CD4-positive, alpha-beta T cell (primary cell): ENCODE measurements at regions of chr1 and their contacts with region 1.

Region 1: DNA sequence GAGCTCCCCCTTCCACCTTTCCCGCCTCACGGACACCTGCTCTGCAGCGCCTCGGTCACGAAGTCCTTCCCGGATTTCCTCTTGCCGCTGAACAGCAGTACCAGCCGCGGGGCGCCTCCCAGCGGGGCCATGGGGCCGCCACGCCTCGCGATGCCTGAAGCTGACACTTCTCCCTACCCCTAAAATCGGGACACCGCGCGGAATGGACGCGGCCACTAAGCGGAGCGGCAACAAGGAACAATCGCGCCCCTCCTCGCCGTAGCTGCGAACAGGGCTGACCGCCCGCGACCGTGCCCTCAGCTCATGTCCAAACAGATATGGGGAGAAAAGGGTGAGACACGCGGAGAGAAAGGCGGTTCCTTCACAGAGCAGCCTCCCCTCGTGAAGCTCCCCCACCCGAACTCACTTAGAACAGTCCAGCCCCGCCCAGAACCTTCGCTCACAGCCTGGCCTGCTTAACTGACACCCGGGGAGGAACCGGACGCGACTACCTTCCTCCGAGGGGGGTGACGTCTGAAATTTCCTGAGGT is at the start of gene PMVK:
- DNase-seq: peak; percentile 90 to 98 (median 94)
- ATAC-seq: peak; percentile 79
- H3K4me3 ChIP-seq: peak within 1 kb of the TSS; percentile 86
- H3K4me3 Mint-ChIP-seq: peak within 1 kb of the TSS; percentile 90
- H3K27ac ChIP-seq: peak within 1 kb of the TSS; percentile 98 to 100
- H3K27ac Mint-ChIP-seq: peak within 1 kb of the TSS; percentile 98
- H3K4me1 ChIP-seq: peaks cover 58% of the 10 kb centered on the region
- H3K4me1 Mint-ChIP-seq: peaks cover 59% of the 10 kb centered on the region
- H3K27me3 ChIP-seq: no peaks in the 10 kb centered on the region
- H3K27me3 Mint-ChIP-seq: no peaks in the 10 kb centered on the region
- CTCF ChIP-seq: peak; percentile 51
- total RNA-seq, gene PMVK: 6.6 to 7.4 TPM

Region 2: DNA sequence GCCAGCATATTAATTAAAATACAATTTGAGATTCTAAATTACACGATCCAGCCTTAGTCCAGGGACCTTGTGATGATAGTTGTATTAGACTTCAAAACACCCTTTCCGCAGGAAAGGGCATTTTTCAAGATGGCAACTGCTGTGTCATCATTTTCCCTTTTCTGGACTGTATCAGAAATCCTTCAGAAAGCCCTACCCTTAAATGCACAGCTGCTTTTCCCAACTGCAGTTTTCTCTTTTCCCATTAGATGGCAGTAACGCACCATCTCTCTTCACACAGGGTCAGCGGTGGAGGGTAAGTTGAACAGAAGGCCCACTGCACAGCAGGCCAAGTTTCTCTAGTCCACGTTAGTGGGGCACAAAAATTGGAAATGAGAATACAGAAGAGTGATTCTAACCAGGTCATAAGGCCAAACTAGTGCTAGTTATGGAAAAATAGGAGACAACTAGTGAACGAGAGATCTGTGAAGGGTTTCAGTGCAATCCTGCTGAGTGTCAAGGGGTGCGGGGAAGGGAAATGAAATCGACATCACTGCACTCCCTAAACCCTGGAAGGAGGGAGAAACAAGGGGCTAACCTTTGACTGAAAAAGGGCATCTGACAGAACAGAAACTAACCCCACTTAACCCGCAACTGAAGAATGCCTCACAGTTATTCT is 456.7 kb before region 1 on chr1:
- CTCF ChIA-PET with region 1: no interaction called
- POLR2A ChIA-PET with region 1: no interaction called
- intact Hi-C with region 1: no loop called
- DNase-seq: peak in 13 of 14 experiments; percentile 23 to 84 (median 43)
- ATAC-seq: peak; percentile 91
- H3K4me3 ChIP-seq: no peak overlapping the region
- H3K4me3 Mint-ChIP-seq: no peak overlapping the region
- H3K27ac ChIP-seq: no peak overlapping the region
- H3K27ac Mint-ChIP-seq: no peak overlapping the region
- H3K4me1 ChIP-seq: peaks cover 7% of the 10 kb centered on the region
- H3K4me1 Mint-ChIP-seq: peaks cover 20% of the 10 kb centered on the region
- H3K27me3 ChIP-seq: no peaks in the 10 kb centered on the region
- H3K27me3 Mint-ChIP-seq: no peaks in the 10 kb centered on the region
- CTCF ChIP-seq: peak; percentile 90

Region 3: GRCh38 chr1:154791292-154792166 is 145.1 kb before region 1 on chr1:
- CTCF ChIA-PET with region 1: interaction called, 3 read pairs
- POLR2A ChIA-PET with region 1: interaction called, 6 read pairs
- intact Hi-C with region 1: loop called in 1 of 2 experiments (anchors 2 kb)
- DNase-seq: peak; percentile 71 to 95 (median 82)
- ATAC-seq: peak; percentile 98
- H3K4me3 ChIP-seq: no peak overlapping the region
- H3K4me3 Mint-ChIP-seq: peak overlapping the region; percentile 70
- H3K27ac ChIP-seq: peak overlapping the region in 1 of 2 donors; percentile 51
- H3K27ac Mint-ChIP-seq: peak overlapping the region; percentile 71
- H3K4me1 ChIP-seq: peaks cover 26% of the 10 kb centered on the region
- H3K4me1 Mint-ChIP-seq: peaks cover 33% of the 10 kb centered on the region
- H3K27me3 ChIP-seq: no peaks in the 10 kb centered on the region
- H3K27me3 Mint-ChIP-seq: no peaks in the 10 kb centered on the region
- CTCF ChIP-seq: peak; percentile 38

Region 4: DNA sequence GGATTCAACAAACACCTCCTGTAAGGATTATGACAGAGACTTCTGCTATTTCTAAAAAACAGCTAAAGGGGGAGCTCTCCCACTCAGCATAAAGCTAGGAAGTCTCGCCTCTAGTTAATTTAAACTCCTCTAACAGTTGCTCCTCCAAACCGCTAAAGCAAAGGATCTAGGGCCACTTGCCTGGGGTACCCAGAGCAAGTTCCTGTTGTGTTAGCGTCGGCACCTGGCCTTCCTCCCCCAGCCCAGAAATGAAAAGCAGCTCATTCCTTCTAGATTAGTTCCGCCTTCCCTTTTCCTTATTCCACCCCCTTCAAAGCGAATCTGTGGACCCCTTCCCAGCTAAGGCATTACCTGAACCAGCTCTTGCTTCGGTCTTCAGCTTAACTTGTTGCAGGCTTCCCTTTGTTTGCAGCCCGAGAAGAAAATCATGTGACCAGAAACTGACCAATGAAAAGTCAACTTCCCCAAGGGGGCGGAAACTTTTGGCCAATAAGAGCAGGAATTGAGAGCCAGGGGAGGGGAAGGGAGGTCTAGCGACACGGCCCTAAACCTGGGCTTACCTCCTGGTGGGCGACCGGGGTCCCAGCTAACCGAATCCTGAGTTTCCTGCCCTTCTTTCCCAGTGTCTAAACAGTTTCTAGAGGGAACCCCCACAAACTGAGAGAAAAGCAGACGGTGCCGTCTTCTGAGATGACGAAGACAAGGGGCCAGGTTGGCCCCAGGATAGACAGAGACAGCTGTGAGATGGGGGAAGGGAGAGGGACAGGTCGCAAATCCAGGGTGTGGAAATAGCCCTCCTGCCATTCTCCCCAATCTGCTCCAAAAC is 19.3 kb after region 1 on chr1 and contains the start of gene PBXIP1:
- CTCF ChIA-PET with region 1: interaction called, 38 read pairs
- POLR2A ChIA-PET with region 1: interaction called, 23 read pairs
- intact Hi-C with region 1: loop called (anchors 1 kb)
- DNase-seq: peak; percentile 64 to 95 (median 78)
- ATAC-seq: peak; percentile 40
- H3K4me3 ChIP-seq: peak within 1 kb of the TSS; percentile 69
- H3K4me3 Mint-ChIP-seq: peak within 1 kb of the TSS; percentile 95
- H3K27ac ChIP-seq: peak within 1 kb of the TSS; percentile 100
- H3K27ac Mint-ChIP-seq: peak within 1 kb of the TSS; percentile 96
- H3K4me1 ChIP-seq: peaks cover 96% of the 10 kb centered on the region
- H3K4me1 Mint-ChIP-seq: peaks cover 57% of the 10 kb centered on the region
- H3K27me3 ChIP-seq: no peaks in the 10 kb centered on the region
- H3K27me3 Mint-ChIP-seq: no peaks in the 10 kb centered on the region
- CTCF ChIP-seq: peak; percentile 40
- total RNA-seq, gene PBXIP1: 434 to 440 TPM

Region 5: GRCh38 chr1:154961497-154962262 is 25.1 kb after region 1 on chr1 and contains the start of gene PYGO2:
- CTCF ChIA-PET with region 1: interaction called, 23 read pairs
- POLR2A ChIA-PET with region 1: interaction called, 23 read pairs
- intact Hi-C with region 1: loop called in 1 of 2 experiments (anchors 1 kb)
- DNase-seq: peak; percentile 65 to 91 (median 77)
- ATAC-seq: peak; percentile 72
- H3K4me3 ChIP-seq: peak within 1 kb of the TSS; percentile 68
- H3K4me3 Mint-ChIP-seq: peak within 1 kb of the TSS; percentile 99
- H3K27ac ChIP-seq: peak within 1 kb of the TSS; percentile 88 to 95
- H3K27ac Mint-ChIP-seq: peak within 1 kb of the TSS; percentile 98
- H3K4me1 ChIP-seq: peaks cover 58% of the 10 kb centered on the region
- H3K4me1 Mint-ChIP-seq: peaks cover 20% of the 10 kb centered on the region
- H3K27me3 ChIP-seq: no peaks in the 10 kb centered on the region
- H3K27me3 Mint-ChIP-seq: no peaks in the 10 kb centered on the region
- CTCF ChIP-seq: peak; percentile 60
- total RNA-seq, gene PYGO2: 30.3 to 32.8 TPM

Region 6: GRCh38 chr1:154974063-154974807 is 37.6 kb after region 1 on chr1 and contains the start of gene CKS1B:
- CTCF ChIA-PET with region 1: interaction called, 3 read pairs
- POLR2A ChIA-PET with region 1: interaction called, 20 read pairs
- intact Hi-C with region 1: loop called (anchors 1 to 2 kb)
- DNase-seq: peak; percentile 93 to 100 (median 96)
- ATAC-seq: peak; percentile 87
- H3K4me3 ChIP-seq: peak within 1 kb of the TSS; percentile 81
- H3K4me3 Mint-ChIP-seq: no peak within 1 kb of the TSS
- H3K27ac ChIP-seq: peak within 1 kb of the TSS; percentile 94 to 99
- H3K27ac Mint-ChIP-seq: no peak within 1 kb of the TSS
- H3K4me1 ChIP-seq: peaks cover 49% of the 10 kb centered on the region
- H3K4me1 Mint-ChIP-seq: peaks cover 26% of the 10 kb centered on the region
- H3K27me3 ChIP-seq: no peaks in the 10 kb centered on the region
- H3K27me3 Mint-ChIP-seq: no peaks in the 10 kb centered on the region
- CTCF ChIP-seq: no peak
- total RNA-seq, gene CKS1B: 1.4 to 3.9 TPM

Region 7: GRCh38 chr1:154982897-154983648 is 46.5 kb after region 1 on chr1 and contains the start of gene FLAD1:
- CTCF ChIA-PET with region 1: interaction called, 8 read pairs
- POLR2A ChIA-PET with region 1: interaction called, 22 read pairs
- intact Hi-C with region 1: no loop called
- DNase-seq: peak; percentile 85 to 99 (median 92)
- ATAC-seq: peak; percentile 99
- H3K4me3 ChIP-seq: peak within 1 kb of the TSS; percentile 64
- H3K4me3 Mint-ChIP-seq: no peak within 1 kb of the TSS
- H3K27ac ChIP-seq: peak within 1 kb of the TSS; percentile 13 to 54
- H3K27ac Mint-ChIP-seq: no peak within 1 kb of the TSS
- H3K4me1 ChIP-seq: peaks cover 28% of the 10 kb centered on the region
- H3K4me1 Mint-ChIP-seq: peaks cover 10% of the 10 kb centered on the region
- H3K27me3 ChIP-seq: no peaks in the 10 kb centered on the region
- H3K27me3 Mint-ChIP-seq: no peaks in the 10 kb centered on the region
- CTCF ChIP-seq: no peak
- total RNA-seq, gene FLAD1: 16.7 to 19.4 TPM

Region 8: DNA sequence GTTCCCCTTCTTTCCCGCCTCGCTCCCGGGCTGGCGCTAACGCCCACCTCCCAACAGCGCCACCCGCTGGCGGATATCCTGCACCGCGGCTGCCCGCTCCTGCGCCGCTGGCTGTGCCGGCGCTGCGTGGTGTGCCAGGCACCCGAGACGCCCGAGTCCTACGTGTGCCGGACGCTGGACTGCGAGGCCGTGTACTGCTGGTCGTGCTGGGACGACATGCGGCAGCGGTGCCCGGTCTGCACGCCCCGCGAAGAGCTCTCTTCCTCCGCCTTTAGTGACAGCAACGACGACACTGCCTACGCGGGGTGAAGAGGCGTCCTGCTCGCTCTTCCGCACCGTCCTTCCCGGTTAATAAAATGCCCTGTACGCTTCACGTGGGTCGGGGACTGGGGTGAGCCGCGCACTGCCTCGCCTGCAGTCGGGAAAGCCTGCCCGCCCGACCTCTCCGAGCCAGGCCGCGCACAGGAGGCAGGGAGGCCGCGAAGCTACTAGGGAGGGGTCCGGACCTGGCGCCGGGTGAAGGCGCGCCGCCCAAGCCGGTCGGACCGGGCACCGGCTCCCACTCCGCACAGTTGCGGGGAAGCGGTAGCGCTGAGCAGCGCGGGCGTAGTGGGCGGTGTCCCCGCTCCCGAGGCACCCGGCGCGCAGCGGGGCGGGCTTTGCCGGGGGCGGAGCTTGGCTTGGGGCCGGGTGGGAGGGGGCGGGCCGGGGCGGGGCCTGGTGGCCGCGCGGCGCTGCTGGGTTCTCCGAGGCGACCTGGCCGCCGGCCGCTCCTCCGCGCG is 114.1 kb after region 1 on chr1 and contains the start of gene ADAM15:
- CTCF ChIA-PET with region 1: no interaction called
- POLR2A ChIA-PET with region 1: interaction called, 10 read pairs
- intact Hi-C with region 1: no loop called
- DNase-seq: peak; percentile 63 to 91 (median 74)
- ATAC-seq: peak; percentile 81
- H3K4me3 ChIP-seq: peak within 1 kb of the TSS; percentile 87
- H3K4me3 Mint-ChIP-seq: peak within 1 kb of the TSS; percentile 91
- H3K27ac ChIP-seq: peak within 1 kb of the TSS; percentile 55 to 61
- H3K27ac Mint-ChIP-seq: peak within 1 kb of the TSS; percentile 55
- H3K4me1 ChIP-seq: peaks cover 33% of the 10 kb centered on the region
- H3K4me1 Mint-ChIP-seq: peaks cover 26% of the 10 kb centered on the region
- H3K27me3 ChIP-seq: no peaks in the 10 kb centered on the region
- H3K27me3 Mint-ChIP-seq: no peaks in the 10 kb centered on the region
- CTCF ChIP-seq: peak; percentile 95
- total RNA-seq, gene ADAM15: 17.2 to 20.1 TPM